IMR-90 (cell line): ENCODE measurements at regions of chr12 and their contacts with region 1.

Region 1: GRCh38 chr12:79935021-79935623 is at the start of gene PPP1R12A:
- DNase-seq: peak; percentile 97
- ATAC-seq: peak; percentile 94
- H3K4me3 ChIP-seq: peak within 1 kb of the TSS; percentile 93
- H3K27ac ChIP-seq: peak within 1 kb of the TSS; percentile 98
- H3K4me1 ChIP-seq: no peaks in the 10 kb centered on the region
- H3K27me3 ChIP-seq: no peaks in the 10 kb centered on the region
- CTCF ChIP-seq: no peak
- POLR2A ChIP-seq: peak; percentile 93
- RAD21 ChIP-seq: no peak
- total RNA-seq, gene PPP1R12A: 112 and 204 TPM in 2 replicates

Region 2: DNA sequence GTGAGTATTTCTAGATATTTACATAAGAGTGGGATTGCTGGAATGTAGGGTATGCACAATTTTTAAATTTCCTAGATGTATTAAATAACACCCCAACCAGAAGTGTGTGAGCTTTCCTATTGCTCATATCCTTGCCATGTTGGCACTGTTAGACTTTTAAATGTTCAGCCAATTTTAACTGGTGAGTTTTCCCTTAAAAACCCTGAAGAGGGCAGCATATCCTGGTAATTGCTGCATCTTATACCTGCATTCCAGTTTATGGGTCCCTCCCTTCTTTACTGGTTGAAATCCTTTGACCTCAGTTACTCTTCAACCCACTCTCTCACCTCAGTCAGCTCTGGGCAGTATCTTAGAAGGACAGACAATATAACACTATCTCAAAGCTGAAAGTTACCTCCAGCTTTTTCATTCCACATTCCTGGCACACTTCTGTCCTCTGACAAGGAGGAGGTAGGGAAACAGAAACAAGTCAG is 514.9 kb before region 1 on chr12:
- CTCF ChIA-PET with region 1: interaction called, 3 read pairs
- POLR2A ChIA-PET with region 1: no interaction called
- dilution Hi-C with region 1: no loop called
- in situ Hi-C with region 1: loop called (anchors 25 kb)
- intact Hi-C with region 1: loop called (anchors 5 kb)
- DNase-seq: peak; percentile 95
- ATAC-seq: peak; percentile 66
- H3K4me3 ChIP-seq: no peak overlapping the region
- H3K27ac ChIP-seq: peak overlapping the region; percentile 72
- H3K4me1 ChIP-seq: peaks cover 24% of the 10 kb centered on the region
- H3K27me3 ChIP-seq: no peaks in the 10 kb centered on the region
- CTCF ChIP-seq: peak; percentile 79
- POLR2A ChIP-seq: no peak
- RAD21 ChIP-seq: peak; percentile 80

Region 3: DNA sequence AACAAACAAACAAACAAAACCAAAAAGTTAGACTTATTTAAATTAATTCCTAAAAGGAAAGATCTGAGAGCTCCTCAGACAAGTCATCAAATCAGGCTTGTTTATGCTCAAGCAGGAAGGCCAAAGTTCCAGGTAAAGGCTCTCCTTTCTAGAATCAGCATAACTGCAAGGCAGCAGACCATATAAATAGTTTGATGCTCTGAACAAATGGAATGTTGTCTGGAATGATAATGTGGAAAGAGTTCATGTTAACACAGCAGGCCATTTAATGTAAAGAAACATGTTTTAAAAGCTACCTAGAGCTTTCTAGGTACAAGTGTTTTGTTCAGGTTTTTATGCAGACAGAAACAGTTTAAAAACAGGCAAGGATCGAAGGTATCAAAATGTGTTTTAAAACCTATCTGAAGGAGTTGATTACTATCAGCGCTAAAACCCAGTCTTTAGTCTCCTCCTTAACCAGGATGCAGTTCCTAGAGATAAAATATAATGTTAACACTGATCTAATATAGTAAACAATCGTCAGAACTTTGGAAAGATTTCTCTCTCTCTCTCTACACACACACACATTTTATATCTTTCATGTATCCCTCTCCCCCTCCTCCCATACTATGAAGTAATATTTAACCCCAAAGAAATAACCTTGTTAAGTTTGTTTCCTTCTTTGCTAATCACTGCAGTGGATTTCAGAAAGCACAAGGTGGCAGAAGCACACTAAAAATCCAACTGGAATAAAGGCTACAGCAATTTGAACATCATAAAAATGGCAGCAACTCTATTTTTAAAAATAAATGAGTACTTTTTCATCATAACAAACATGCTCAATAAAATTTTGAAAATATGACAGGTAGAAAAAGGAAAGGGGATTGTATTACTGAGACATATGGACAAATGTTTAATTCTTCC is 379.8 kb before region 1 on chr12:
- CTCF ChIA-PET with region 1: no interaction called
- POLR2A ChIA-PET with region 1: no interaction called
- dilution Hi-C with region 1: no loop called
- in situ Hi-C with region 1: no loop called
- intact Hi-C with region 1: loop called (anchors 2 kb)
- DNase-seq: peak; percentile 79
- ATAC-seq: peak; percentile 75
- H3K4me3 ChIP-seq: no peak overlapping the region
- H3K27ac ChIP-seq: no peak overlapping the region; the same call in 1 of the 2 replicates
- H3K4me1 ChIP-seq: peaks cover 15% of the 10 kb centered on the region; the same call in 1 of the 2 replicates
- H3K27me3 ChIP-seq: no peaks in the 10 kb centered on the region
- CTCF ChIP-seq: peak; percentile 89
- POLR2A ChIP-seq: no peak; the same call in 1 of the 2 replicates
- RAD21 ChIP-seq: peak; percentile 87

Region 4: GRCh38 chr12:79776111-79776510 is 159.0 kb before region 1 on chr12:
- CTCF ChIA-PET with region 1: interaction called, 3 read pairs
- POLR2A ChIA-PET with region 1: no interaction called
- dilution Hi-C with region 1: no loop called
- in situ Hi-C with region 1: no loop called
- intact Hi-C with region 1: loop called (anchors 5 kb)
- DNase-seq: peak; percentile 68
- ATAC-seq: peak; percentile 63
- H3K4me3 ChIP-seq: no peak overlapping the region
- H3K27ac ChIP-seq: no peak overlapping the region
- H3K4me1 ChIP-seq: no peaks in the 10 kb centered on the region
- H3K27me3 ChIP-seq: no peaks in the 10 kb centered on the region
- CTCF ChIP-seq: no peak
- POLR2A ChIP-seq: no peak
- RAD21 ChIP-seq: no peak

Region 5: DNA sequence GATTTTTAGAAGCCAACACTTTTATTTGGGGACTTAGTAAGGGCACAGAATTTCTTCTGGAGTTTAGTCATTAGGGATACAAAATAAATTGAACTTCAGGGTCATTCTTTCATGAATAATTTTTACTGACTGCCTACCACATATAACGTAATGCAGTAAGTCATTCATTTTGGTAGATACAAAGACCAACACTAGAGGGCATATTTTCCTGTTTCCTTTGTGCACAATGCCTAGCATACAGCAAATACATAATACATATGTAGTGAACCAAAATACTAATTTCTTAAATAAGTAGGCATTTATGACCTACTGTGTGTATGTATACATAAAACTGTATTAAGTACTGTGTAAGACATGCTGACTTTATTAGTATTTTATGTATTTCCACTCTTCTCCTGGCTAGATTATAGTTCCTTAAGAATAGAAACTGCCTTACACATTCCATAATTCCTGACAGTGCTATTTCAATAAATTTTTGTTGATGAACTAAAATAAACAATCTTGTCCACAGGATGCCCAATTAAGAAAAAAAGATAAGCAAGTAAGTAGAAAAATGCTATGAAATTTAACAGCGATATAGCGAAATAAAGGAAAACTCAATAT is 48.1 kb before region 1 on chr12:
- CTCF ChIA-PET with region 1: no interaction called
- POLR2A ChIA-PET with region 1: no interaction called
- dilution Hi-C with region 1: no loop called
- in situ Hi-C with region 1: no loop called
- intact Hi-C with region 1: loop called (anchors 2 kb)
- DNase-seq: peak; percentile 66
- ATAC-seq: peak; percentile 69
- H3K4me3 ChIP-seq: no peak overlapping the region
- H3K27ac ChIP-seq: no peak overlapping the region
- H3K4me1 ChIP-seq: peaks cover 2% of the 10 kb centered on the region
- H3K27me3 ChIP-seq: no peaks in the 10 kb centered on the region
- CTCF ChIP-seq: peak; percentile 57
- POLR2A ChIP-seq: no peak
- RAD21 ChIP-seq: peak; percentile 60

Region 6: DNA sequence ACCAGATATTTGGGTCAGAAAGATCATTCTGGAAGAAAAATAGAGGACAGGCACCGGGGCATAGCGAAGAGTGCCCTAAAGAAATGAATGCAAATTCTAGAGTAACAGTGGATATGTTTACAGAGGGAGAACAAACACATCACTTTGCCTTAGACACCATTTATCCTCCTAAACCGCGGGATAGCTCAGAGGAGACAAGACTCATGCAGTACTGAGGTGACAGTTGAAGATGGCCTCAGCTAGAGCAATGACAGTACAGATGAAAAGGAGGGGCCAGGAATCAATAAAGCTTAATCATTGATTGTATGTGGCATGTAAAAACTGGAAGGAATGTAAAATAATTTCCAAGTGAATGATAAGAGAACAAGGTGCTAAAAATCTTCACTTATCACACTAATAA is 10.3 kb after region 1 on chr12:
- CTCF ChIA-PET with region 1: no interaction called
- POLR2A ChIA-PET with region 1: no interaction called
- dilution Hi-C with region 1: no loop called
- in situ Hi-C with region 1: no loop called
- intact Hi-C with region 1: no loop called
- DNase-seq: no peak
- ATAC-seq: no peak
- H3K4me3 ChIP-seq: no peak overlapping the region
- H3K27ac ChIP-seq: no peak overlapping the region
- H3K4me1 ChIP-seq: no peaks in the 10 kb centered on the region
- H3K27me3 ChIP-seq: no peaks in the 10 kb centered on the region
- CTCF ChIP-seq: no peak
- POLR2A ChIP-seq: no peak
- RAD21 ChIP-seq: no peak

Region 7: DNA sequence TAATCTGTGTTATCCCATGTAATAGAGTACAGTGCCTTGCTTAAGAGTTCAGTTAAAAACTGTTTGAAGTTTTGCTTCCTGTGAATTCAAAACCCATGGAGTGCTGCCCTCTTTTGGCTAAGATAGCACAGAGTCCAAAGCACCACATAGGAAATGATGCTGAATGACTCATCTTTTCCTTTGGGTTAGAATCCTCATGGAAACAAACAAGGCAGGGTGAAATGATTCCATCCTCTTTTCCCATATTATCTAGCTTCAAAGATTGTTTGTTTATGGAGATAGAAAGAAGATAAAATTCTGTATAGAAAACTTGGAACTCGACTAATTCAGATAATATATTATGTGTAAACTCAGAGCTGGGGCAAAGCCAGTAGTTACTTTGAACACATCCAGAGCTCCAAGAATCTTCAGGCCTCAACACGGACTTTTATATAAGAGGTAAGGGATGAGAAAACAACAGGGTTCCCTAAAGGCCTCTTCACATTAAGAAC is 251.7 kb after region 1 on chr12:
- CTCF ChIA-PET with region 1: no interaction called
- POLR2A ChIA-PET with region 1: no interaction called
- dilution Hi-C with region 1: no loop called
- in situ Hi-C with region 1: loop called (anchors 10 kb)
- intact Hi-C with region 1: loop called (anchors 1 kb)
- DNase-seq: peak; percentile 97
- ATAC-seq: peak; percentile 86
- H3K4me3 ChIP-seq: no peak overlapping the region
- H3K27ac ChIP-seq: peak overlapping the region; percentile 77
- H3K4me1 ChIP-seq: peaks cover 17% of the 10 kb centered on the region
- H3K27me3 ChIP-seq: no peaks in the 10 kb centered on the region
- CTCF ChIP-seq: peak; percentile 93
- POLR2A ChIP-seq: peak; percentile 55; the same call in 1 of the 2 replicates
- RAD21 ChIP-seq: peak; percentile 92